BJ (cell line): ENCODE measurements at regions of chr3 and their contacts with region 1.

Region 1: GRCh38 chr3:114418724-114419543 is 125.1 kb downstream of the TIGIT start:
- DNase-seq: peak; percentile 90
- H3K4me3 ChIP-seq: peak overlapping the region; percentile 13; the same call in 1 of the 2 replicates
- H3K27me3 ChIP-seq: no peaks in the 10 kb centered on the region
- CTCF ChIP-seq: peak; percentile 71

Region 2: DNA sequence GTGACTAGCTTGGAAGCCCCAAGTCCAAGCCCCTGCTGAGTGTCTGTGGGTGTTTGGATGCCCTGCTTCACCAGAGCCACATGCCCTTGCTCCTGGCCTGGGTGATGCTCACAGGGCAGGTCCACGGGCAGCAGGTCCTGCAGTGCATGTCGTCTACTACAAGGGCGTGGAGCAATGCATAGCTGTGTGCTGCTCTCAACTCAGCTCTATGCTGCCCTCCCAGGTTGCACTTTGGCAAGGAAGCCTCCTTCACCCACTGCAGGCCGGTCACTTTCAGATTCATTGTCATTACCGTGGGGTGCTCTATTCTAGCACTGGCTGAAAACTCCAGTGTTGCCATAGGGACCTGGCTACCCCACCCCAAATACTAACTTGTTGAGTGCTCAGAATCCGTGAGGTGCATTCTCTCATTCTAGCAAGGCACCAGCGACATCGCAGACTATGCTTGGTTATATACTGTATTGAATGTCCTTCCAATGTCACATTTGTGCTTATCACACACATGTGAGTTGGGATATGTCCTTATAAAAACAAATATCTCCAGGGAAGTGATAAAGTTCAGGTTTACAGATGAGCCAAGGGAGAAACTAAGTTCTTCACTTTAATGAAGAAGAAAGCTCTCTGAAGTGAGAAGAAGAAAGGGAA is 528.6 kb before region 1 on chr3:
- CTCF ChIA-PET with region 1: no interaction called
- POLR2A ChIA-PET with region 1: no interaction called
- DNase-seq: no peak
- H3K4me3 ChIP-seq: no peak overlapping the region
- H3K27me3 ChIP-seq: no peaks in the 10 kb centered on the region
- CTCF ChIP-seq: no peak

Region 3: GRCh38 chr3:114435386-114436115 is 16.6 kb after region 1 on chr3:
- CTCF ChIA-PET with region 1: interaction called, 13 read pairs
- POLR2A ChIA-PET with region 1: no interaction called
- DNase-seq: no peak
- H3K4me3 ChIP-seq: no peak overlapping the region
- H3K27me3 ChIP-seq: no peaks in the 10 kb centered on the region
- CTCF ChIP-seq: no peak

Region 4: GRCh38 chr3:114442246-114442645 is 23.3 kb after region 1 on chr3:
- CTCF ChIA-PET with region 1: interaction called, 13 read pairs
- POLR2A ChIA-PET with region 1: no interaction called
- DNase-seq: no peak
- H3K4me3 ChIP-seq: no peak overlapping the region
- H3K27me3 ChIP-seq: no peaks in the 10 kb centered on the region
- CTCF ChIP-seq: no peak